SK-N-SH (cell line): ENCODE measurements at regions of chr10 and their contacts with region 1.

Region 1: GRCh38 chr10:31581741-31582313 is 262.8 kb downstream of the ZEB1 start:
- DNase-seq: peak; percentile 38
- H3K4me3 ChIP-seq: peak overlapping the region in 1 of 2 experiments; percentile 9; a peak in 1 of 4 replicates
- H3K27ac ChIP-seq: peak overlapping the region in 1 of 2 experiments; percentile 92; a peak in 2 of 4 replicates
- H3K4me1 ChIP-seq: peaks cover 0 to 40% of the 10 kb centered on the region in 2 experiments; a peak in 2 of 4 replicates
- H3K27me3 ChIP-seq: no peaks in the 10 kb centered on the region
- CTCF ChIP-seq: no peak
- EP300 ChIP-seq: no peak
- RAD21 ChIP-seq: no peak

Region 2: GRCh38 chr10:31603235-31604087 is 21.6 kb after region 1 on chr10:
- CTCF ChIA-PET with region 1: interaction called, 15 read pairs
- POLR2A ChIA-PET with region 1: interaction called, 8 read pairs
- DNase-seq: peak; percentile 98
- H3K4me3 ChIP-seq: peak overlapping the region; percentile 72
- H3K27ac ChIP-seq: peak overlapping the region; percentile 56 to 75
- H3K4me1 ChIP-seq: peaks cover 4 to 13% of the 10 kb centered on the region in 2 experiments; a peak in 2 of 4 replicates
- H3K27me3 ChIP-seq: no peaks in the 10 kb centered on the region
- CTCF ChIP-seq: no peak
- EP300 ChIP-seq: no peak; a peak in 1 of 4 replicates
- RAD21 ChIP-seq: peak; percentile 16

Region 3: DNA sequence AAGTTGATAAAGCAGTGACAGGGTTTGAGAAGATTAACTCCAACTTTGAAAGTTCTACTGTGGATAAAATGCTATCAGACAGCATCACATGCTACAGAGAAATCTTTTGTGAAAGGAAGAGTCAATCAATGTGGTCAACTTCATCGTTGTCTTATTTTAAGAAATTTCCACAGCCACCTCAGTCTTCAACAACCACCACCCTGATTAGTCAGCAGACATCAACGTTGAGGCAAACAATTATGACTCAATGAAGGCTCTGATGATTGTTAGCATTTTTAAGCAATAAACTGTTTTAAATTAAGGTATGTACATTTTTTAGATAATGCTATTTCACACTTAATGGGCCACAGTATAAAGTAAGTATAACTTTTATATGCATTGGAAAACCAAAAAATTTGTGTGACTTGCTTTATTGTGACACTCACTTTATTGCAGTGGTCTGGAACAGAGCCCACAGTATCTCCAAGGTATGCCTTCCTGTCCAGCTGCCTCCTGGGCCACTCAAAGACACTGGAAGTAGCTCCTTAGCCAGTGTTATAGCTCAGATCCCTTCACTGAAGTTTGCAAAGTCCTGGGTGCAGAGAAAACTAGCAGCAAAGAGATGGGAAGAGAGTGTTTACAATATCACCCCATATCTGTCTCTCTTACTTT is 53.7 kb after region 1 on chr10:
- CTCF ChIA-PET with region 1: no interaction called
- POLR2A ChIA-PET with region 1: no interaction called
- DNase-seq: no peak
- H3K4me3 ChIP-seq: no peak overlapping the region
- H3K27ac ChIP-seq: no peak overlapping the region
- H3K4me1 ChIP-seq: no peaks in the 10 kb centered on the region; a peak in 1 of 4 replicates
- H3K27me3 ChIP-seq: no peaks in the 10 kb centered on the region
- CTCF ChIP-seq: no peak
- EP300 ChIP-seq: no peak
- RAD21 ChIP-seq: no peak